GM12878 (cell line): ENCODE measurements at regions of chr1 and their contacts with region 1.

Region 1: DNA sequence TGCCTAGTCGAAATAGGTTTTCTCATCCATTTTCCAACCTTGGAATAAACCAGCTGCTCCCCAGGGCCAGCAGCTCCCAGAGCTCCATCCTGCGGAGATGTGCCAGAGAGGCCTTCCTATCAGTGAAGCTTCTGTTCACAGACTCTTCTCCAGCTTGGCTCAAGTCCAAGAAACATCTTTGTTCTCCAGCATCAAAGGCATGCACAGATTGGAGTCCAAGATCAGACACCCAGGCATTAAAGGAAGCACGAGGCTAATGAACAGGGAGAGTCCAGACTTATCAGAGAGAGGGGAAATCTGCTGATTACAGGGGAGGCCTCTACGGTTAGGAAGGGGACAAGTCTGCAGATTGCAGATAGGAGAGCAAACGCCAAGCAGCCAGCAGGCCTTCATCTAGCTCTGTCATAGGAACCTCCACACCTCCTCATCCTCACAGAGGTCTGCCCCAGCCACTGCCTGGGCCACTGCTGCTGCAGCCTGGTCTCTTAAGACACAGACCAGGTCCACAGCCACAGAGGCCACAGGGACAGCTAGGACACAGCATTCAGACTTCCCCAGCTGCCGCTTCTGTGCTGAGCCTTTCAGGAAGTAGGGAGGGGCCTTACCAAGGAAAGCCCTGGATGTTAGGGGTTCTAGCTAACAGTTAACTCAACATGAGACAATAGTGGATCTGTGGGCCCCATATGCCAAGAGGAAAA is 3.4 kb downstream of the PRR9 start:
- DNase-seq: no peak
- ATAC-seq: no peak
- H3K4me3 ChIP-seq: no peak overlapping the region
- H3K27ac ChIP-seq: no peak overlapping the region
- H3K4me1 ChIP-seq: no peaks in the 10 kb centered on the region
- H3K27me3 ChIP-seq: peaks cover 0 to 2% of the 10 kb centered on the region in 2 experiments; a peak in 1 of 4 replicates
- CTCF ChIP-seq: no peak
- EP300 ChIP-seq: no peak
- POLR2A ChIP-seq: no peak
- RAD21 ChIP-seq: no peak

Region 2: GRCh38 chr1:152479792-152480595 is 740.8 kb before region 1 on chr1:
- CTCF ChIA-PET with region 1: no interaction called
- POLR2A ChIA-PET with region 1: no interaction called
- RAD21 ChIA-PET with region 1: no interaction called
- SMC1A ChIA-PET with region 1: no interaction called
- in situ Hi-C with region 1: no loop called
- intact Hi-C with region 1: loop called (anchors 10 kb)
- DNase-seq: no peak
- ATAC-seq: peak; percentile 88
- H3K4me3 ChIP-seq: no peak overlapping the region
- H3K27ac ChIP-seq: no peak overlapping the region
- H3K4me1 ChIP-seq: no peaks in the 10 kb centered on the region
- H3K27me3 ChIP-seq: no peaks in the 10 kb centered on the region
- CTCF ChIP-seq: peak; percentile 37 to 56 (median 56)
- EP300 ChIP-seq: no peak
- POLR2A ChIP-seq: no peak
- RAD21 ChIP-seq: no peak

Region 3: DNA sequence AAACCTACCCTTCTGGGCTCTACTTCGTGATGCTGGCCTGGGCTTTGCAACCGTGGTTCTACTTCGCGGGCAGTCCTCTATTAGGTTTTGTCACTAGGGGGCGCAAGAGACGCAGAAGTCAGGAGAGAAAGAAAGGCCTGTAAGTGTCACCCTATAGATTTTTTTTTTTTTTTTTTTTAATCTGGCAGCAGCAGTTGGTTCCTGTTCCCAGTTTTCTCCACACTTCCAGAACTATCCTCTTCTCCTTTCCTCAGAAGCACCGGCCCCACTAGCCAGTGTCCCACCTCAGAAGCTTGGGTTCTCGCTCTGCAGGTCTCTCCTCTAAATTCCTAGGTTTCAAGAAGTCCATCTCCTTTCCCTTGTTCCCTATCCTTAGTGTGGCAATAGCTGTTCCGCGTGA is 566.6 kb before region 1 on chr1:
- CTCF ChIA-PET with region 1: interaction called, 7 read pairs
- POLR2A ChIA-PET with region 1: no interaction called
- RAD21 ChIA-PET with region 1: no interaction called
- SMC1A ChIA-PET with region 1: interaction called, 3 read pairs
- in situ Hi-C with region 1: loop called (anchors 10 kb)
- intact Hi-C with region 1: loop called (anchors 2 kb)
- DNase-seq: no peak
- ATAC-seq: peak; percentile 93
- H3K4me3 ChIP-seq: no peak overlapping the region
- H3K27ac ChIP-seq: no peak overlapping the region
- H3K4me1 ChIP-seq: no peaks in the 10 kb centered on the region
- H3K27me3 ChIP-seq: peaks cover 0 to 9% of the 10 kb centered on the region in 2 experiments; a peak in 2 of 4 replicates
- CTCF ChIP-seq: peak; percentile 68 to 84 (median 80)
- EP300 ChIP-seq: no peak
- POLR2A ChIP-seq: no peak
- RAD21 ChIP-seq: peak; percentile 77

Region 4: DNA sequence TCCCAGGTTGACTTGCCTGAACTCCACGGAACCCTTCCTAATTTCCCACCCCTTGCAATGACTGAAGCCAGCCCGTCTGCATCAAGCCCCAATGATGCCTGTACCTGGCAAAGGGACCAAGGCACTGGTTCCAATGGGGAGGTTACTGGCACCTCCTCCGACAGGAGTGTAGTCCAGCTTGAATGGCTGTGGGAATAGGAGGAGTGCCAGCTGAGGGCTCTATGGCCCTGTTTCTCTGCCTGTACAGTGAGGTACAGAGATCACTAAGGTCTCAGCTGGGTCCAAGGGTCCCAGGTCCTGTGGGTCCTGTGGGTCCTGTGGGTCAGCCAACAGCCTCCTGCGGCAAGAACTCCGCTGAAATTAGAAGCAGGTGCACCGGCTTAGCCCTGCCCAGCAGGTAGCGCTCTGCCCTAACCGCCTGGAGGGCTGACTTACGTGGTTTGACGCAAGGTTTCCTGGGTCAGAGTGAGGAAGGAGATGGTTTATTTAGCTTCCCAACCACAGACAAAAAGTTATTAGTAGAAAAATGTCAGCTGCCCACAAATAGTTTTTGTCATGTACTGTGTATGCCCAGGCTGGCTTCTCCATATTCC is 260.2 kb before region 1 on chr1:
- CTCF ChIA-PET with region 1: interaction called, 10 read pairs
- POLR2A ChIA-PET with region 1: no interaction called
- RAD21 ChIA-PET with region 1: no interaction called
- SMC1A ChIA-PET with region 1: no interaction called
- in situ Hi-C with region 1: no loop called
- intact Hi-C with region 1: loop called (anchors 10 kb)
- DNase-seq: no peak
- ATAC-seq: peak; percentile 67
- H3K4me3 ChIP-seq: no peak overlapping the region
- H3K27ac ChIP-seq: no peak overlapping the region
- H3K4me1 ChIP-seq: no peaks in the 10 kb centered on the region
- H3K27me3 ChIP-seq: peaks cover 0 to 2% of the 10 kb centered on the region in 2 experiments; a peak in 1 of 4 replicates
- CTCF ChIP-seq: peak; percentile 43 to 47 (median 44); a peak in 5 of 6 replicates
- EP300 ChIP-seq: no peak
- POLR2A ChIP-seq: no peak
- RAD21 ChIP-seq: peak; percentile 75

Region 5: DNA sequence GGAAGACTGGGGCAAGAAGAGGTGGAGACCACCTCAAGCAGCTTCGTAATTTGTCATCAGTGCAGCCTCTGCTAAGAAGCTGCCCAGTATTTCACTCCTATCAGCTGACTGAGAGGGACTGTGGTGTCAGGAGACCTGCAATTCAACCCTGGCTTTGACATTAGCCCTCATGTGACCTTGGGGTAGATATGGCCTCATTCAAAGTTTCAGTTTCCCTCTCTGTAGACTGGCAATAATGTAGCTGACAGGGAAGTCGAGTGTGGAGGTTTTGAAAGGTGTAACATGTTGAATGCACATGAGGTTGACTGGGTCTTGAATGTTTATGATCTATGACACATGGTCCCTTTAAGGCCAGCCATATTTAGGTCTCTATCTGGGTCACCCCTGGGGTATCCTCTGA is 252.5 kb before region 1 on chr1:
- CTCF ChIA-PET with region 1: interaction called, 3 read pairs
- POLR2A ChIA-PET with region 1: no interaction called
- RAD21 ChIA-PET with region 1: no interaction called
- SMC1A ChIA-PET with region 1: no interaction called
- in situ Hi-C with region 1: no loop called
- intact Hi-C with region 1: loop called (anchors 10 kb)
- DNase-seq: peak; percentile 40
- ATAC-seq: peak; percentile 94
- H3K4me3 ChIP-seq: no peak overlapping the region
- H3K27ac ChIP-seq: no peak overlapping the region
- H3K4me1 ChIP-seq: peaks cover 6% of the 10 kb centered on the region; the same call in 1 of the 2 replicates
- H3K27me3 ChIP-seq: no peaks in the 10 kb centered on the region; a peak in 1 of 4 replicates
- CTCF ChIP-seq: no peak
- EP300 ChIP-seq: no peak
- POLR2A ChIP-seq: no peak
- RAD21 ChIP-seq: no peak

Region 6: GRCh38 chr1:153168686-153169085 is 52.1 kb before region 1 on chr1:
- CTCF ChIA-PET with region 1: no interaction called
- POLR2A ChIA-PET with region 1: no interaction called
- RAD21 ChIA-PET with region 1: no interaction called
- SMC1A ChIA-PET with region 1: no interaction called
- in situ Hi-C with region 1: no loop called
- intact Hi-C with region 1: no loop called
- DNase-seq: no peak
- ATAC-seq: no peak
- H3K4me3 ChIP-seq: no peak overlapping the region
- H3K27ac ChIP-seq: no peak overlapping the region
- H3K4me1 ChIP-seq: no peaks in the 10 kb centered on the region
- H3K27me3 ChIP-seq: no peaks in the 10 kb centered on the region; a peak in 2 of 4 replicates
- CTCF ChIP-seq: no peak
- EP300 ChIP-seq: no peak
- POLR2A ChIP-seq: no peak
- RAD21 ChIP-seq: no peak